Heart left ventricle (tissue), 16 donors: ENCODE measurements at regions of chr1 and their contacts with region 1.

Region 1: DNA sequence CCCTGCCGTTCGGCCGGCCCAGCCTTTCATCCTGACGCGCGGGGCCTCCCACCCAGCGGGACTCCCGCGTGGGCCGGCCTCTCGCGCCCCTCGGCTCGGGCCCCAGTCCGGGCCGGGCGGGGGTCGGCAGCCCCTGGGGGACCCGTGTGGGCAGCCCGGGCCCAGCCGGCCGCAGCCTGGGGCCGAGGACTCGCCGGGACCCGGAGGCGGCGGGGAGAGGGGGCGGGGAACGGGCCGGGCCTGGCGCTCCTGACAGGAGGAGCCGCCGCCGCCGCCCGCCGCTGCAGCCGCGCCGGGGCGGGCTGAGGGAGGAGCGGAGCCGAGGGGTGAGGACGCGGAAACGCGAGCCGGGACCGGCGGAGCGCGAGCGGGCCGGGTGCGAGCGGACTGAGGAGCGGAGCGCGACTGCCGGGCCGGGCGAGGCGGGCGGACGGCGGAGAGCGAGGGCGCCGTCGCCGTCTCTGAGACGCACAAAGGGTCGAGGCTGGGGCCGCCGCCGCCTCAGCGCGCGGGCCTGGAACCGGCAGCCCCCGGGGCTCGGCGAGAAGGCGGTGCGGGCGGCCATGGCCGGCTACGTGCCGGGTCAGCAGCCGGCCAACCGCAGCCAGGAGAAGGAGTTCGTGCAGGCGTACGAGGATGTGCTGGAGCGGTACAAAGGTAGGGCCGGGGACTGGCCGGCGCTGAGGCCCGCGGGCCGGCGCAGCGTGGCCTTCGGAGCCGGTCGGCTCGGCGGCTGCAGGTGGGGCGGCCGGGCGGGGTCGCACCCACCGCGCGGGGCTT is 79.1 kb downstream of the NDUFS5 start:
- DNase-seq: peak; percentile 79 to 89 (median 83)
- ATAC-seq: peak in 3 of 4 donors; percentile 63 to 91 (median 89)
- H3K4me3 ChIP-seq: peak overlapping the region; percentile 56 to 98 (median 92)
- H3K27ac ChIP-seq: peak overlapping the region; percentile 85 to 97 (median 94)
- H3K4me1 ChIP-seq: peaks cover 0 to 69% (median 46%) of the 10 kb centered on the region in 12 donors
- H3K27me3 ChIP-seq: no peaks in the 10 kb centered on the region
- CTCF ChIP-seq: no peak
- POLR2A ChIP-seq: peak in 1 of 2 donors; percentile 51

Region 2: DNA sequence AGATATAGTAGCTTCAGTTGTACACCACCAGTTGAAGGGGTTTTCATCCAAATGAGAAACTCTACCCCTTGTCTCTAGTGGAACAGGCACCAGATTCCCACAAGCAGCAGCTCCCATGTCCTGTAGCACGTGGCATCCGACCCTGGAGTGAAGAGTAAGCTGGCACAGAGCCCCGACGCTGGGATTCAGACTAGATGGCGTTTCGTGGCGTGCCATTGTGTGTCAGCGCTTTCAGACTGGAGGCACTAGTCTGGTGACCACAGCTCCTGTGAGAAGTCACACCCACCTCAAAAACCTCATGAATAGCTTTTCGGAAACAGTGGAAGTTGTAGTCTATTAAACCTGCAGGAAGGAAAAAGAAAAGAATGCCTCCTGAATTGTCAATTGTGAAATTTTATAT is 265.9 kb before region 1 on chr1:
- intact Hi-C with region 1: no loop called
- DNase-seq: peak; percentile 67 to 86 (median 73)
- ATAC-seq: peak; percentile 72 to 88 (median 79)
- H3K4me3 ChIP-seq: no peak overlapping the region
- H3K27ac ChIP-seq: peak overlapping the region in 4 of 12 donors; percentile 4 to 19 (median 12)
- H3K4me1 ChIP-seq: peaks cover 0 to 35% (median 17%) of the 10 kb centered on the region in 12 donors
- H3K27me3 ChIP-seq: no peaks in the 10 kb centered on the region
- CTCF ChIP-seq: no peak
- POLR2A ChIP-seq: no peak

Region 3: DNA sequence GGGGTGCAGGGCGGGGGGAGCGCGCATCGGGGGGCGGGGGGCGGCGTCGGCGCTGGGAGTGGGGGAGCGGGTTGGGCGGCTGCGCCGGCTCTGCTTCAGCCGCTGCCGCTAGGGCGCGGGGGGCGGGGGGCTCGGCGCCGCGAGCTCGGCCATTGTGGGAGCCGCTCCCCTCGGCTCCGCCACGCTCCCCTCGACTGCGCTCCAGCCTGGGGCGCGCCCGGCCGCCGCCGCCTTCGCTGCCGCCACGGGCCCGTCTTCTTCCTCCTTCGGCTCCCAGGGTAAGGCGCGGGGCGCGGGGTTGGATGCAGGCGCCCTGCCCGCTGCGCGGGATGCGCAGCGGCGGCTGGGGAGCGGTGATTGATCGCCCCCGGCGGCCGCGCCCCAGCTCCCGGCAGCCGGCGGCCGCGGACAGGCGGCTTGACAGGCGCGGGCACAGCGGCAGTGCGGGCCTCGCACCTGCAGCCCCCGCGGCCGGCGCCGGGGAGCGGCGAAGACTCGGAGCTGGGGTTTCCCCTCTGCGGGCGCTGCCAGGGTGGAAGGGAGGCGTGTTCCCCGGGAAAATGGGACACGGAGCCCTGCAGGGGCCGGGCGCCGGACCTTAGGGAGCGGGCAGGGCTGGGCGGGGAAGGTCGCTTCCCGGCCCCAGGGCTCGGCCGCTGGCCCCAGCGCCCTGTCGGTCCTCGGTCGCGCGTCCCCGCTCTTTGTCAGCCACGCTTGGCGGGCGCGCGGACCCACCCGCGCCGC is 23.8 kb before region 1 on chr1:
- intact Hi-C with region 1: no loop called
- DNase-seq: no peak
- ATAC-seq: peak in 2 of 4 donors; percentile 39 to 46
- H3K4me3 ChIP-seq: peak overlapping the region; percentile 31 to 83 (median 60)
- H3K27ac ChIP-seq: peak overlapping the region in 2 of 12 donors; percentile 13 to 19
- H3K4me1 ChIP-seq: peaks cover 0 to 26% (median 12%) of the 10 kb centered on the region in 12 donors
- H3K27me3 ChIP-seq: peaks cover 0 to 29% (median 5%) of the 10 kb centered on the region in 9 donors
- CTCF ChIP-seq: no peak
- POLR2A ChIP-seq: no peak

Region 4: DNA sequence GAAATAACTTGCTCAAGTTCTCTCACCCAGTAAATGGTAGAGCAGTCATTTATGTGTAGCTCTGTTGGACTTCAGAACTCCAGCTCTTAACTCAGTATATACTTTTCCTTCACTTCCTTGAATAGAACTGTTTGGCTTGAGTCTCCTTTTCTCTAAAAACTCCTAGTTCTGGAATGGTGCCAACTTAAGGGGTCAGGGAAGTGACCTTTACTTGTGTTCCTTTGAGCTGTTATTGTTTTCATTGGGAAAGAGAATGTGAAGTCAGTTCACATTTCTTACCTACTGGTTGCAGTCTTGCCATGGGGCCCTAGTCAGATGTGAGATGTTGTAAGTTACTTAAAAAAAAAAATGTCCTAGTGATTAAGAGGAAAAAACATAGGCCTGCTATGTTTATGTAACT is 22.3 kb after region 1 on chr1:
- intact Hi-C with region 1: loop called in 4 of 10 experiments (anchors 2 kb)
- DNase-seq: peak in 2 of 5 donors; percentile 31 to 62
- ATAC-seq: peak; percentile 45 to 67 (median 56)
- H3K4me3 ChIP-seq: no peak overlapping the region
- H3K27ac ChIP-seq: peak overlapping the region; percentile 2 to 88 (median 58)
- H3K4me1 ChIP-seq: peaks cover 5 to 64% (median 50%) of the 10 kb centered on the region in 12 donors
- H3K27me3 ChIP-seq: no peaks in the 10 kb centered on the region
- CTCF ChIP-seq: no peak
- POLR2A ChIP-seq: no peak

Region 5: GRCh38 chr1:39132505-39133339 is 27.5 kb after region 1 on chr1:
- intact Hi-C with region 1: loop called in 4 of 10 experiments (anchors 2 kb)
- DNase-seq: peak; percentile 75 to 89 (median 81)
- ATAC-seq: peak; percentile 84 to 94 (median 88)
- H3K4me3 ChIP-seq: no peak overlapping the region
- H3K27ac ChIP-seq: peak overlapping the region; percentile 49 to 88 (median 70)
- H3K4me1 ChIP-seq: peaks cover 5 to 62% (median 49%) of the 10 kb centered on the region in 12 donors
- H3K27me3 ChIP-seq: no peaks in the 10 kb centered on the region
- CTCF ChIP-seq: peak in 10 of 12 donors; percentile 31 to 62 (median 49)
- POLR2A ChIP-seq: no peak

Region 6: DNA sequence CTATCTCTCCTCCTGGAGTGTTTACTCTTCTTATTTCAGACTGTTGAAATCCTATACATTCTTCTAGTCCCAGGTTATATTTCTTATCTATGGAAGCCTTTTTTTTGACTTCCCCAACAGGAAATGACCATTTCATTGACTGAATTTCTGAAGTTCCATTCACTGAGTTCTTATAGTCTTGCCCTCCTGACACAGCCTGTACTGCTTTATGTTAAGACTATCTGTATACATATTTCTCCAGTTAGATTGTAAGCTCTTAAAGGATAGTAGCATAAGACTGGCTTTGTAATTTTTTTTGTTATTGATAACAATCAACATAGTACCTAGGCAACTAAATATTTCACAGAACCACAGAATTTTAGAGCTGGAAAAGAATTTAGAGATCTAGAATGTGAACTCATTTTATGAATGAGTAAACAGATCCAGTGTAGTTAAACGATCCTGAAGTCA is 84.4 kb after region 1 on chr1:
- intact Hi-C with region 1: loop called (anchors 1 to 5 kb)
- DNase-seq: no peak
- ATAC-seq: no peak
- H3K4me3 ChIP-seq: no peak overlapping the region
- H3K27ac ChIP-seq: peak overlapping the region in 1 of 12 donors; percentile 91
- H3K4me1 ChIP-seq: peaks cover 0 to 58% (median 23%) of the 10 kb centered on the region in 12 donors
- H3K27me3 ChIP-seq: no peaks in the 10 kb centered on the region
- CTCF ChIP-seq: no peak
- POLR2A ChIP-seq: no peak

Region 7: GRCh38 chr1:39196244-39197215 is 91.3 kb after region 1 on chr1:
- intact Hi-C with region 1: loop called in 9 of 10 experiments (anchors 1 to 2 kb)
- DNase-seq: no peak
- ATAC-seq: no peak
- H3K4me3 ChIP-seq: peak overlapping the region in 1 of 12 donors; percentile 15
- H3K27ac ChIP-seq: peak overlapping the region in 5 of 12 donors; percentile 21 to 91 (median 41)
- H3K4me1 ChIP-seq: peaks cover 8 to 67% (median 37%) of the 10 kb centered on the region in 12 donors
- H3K27me3 ChIP-seq: no peaks in the 10 kb centered on the region
- CTCF ChIP-seq: no peak
- POLR2A ChIP-seq: no peak

Region 8: GRCh38 chr1:39258146-39258924 is 153.1 kb after region 1 on chr1:
- intact Hi-C with region 1: loop called in 8 of 10 experiments (anchors 1 to 5 kb)
- DNase-seq: peak in 4 of 5 donors; percentile 58 to 72 (median 69)
- ATAC-seq: peak; percentile 63 to 88 (median 84)
- H3K4me3 ChIP-seq: no peak overlapping the region
- H3K27ac ChIP-seq: peak overlapping the region in 10 of 12 donors; percentile 2 to 53 (median 17)
- H3K4me1 ChIP-seq: peaks cover 0 to 39% (median 20%) of the 10 kb centered on the region in 12 donors
- H3K27me3 ChIP-seq: no peaks in the 10 kb centered on the region
- CTCF ChIP-seq: peak; percentile 77 to 94 (median 85)
- POLR2A ChIP-seq: no peak